ENCODE measurements at regions of chr9 and their contacts with region 1.

Region 1: DNA sequence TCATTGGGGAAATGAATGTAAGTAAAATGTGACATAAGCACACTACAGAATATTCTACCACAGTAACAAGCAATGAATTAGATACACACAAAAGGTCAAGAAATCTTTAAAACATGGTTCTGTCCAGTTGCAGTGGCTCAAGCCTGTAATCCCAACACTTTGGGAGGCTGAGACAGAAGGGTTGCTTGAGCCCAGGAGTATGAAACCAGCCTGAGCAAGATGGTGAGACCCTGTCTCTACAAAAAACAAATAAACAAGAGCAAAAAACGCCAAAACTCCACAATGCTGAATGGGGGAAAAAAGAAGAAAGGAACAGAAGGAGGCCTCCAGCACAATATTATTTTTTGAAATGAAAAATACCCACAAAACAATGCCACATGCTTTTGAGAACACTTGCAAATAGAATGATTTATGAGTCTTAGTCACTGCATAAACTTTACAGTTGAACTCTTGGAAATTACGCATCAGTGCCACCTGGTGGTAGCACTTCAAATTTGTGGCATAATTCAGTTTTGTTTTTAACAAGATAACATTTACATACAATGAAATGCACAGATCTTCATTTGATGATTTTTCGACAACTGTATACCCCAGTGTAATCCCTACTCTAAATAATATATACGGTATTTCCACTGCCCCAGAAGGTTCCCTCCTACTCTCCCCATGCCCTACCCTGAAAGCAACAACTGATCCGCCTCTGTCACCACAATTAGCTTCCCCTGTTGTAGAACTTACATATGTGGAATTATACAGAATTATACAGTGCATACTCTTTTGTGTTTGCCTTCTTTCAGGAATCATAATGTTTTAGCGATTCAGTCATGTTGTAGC is 14.4 kb upstream of the SPINK4 start:
- DNase-seq: peak; percentile 84
- ATAC-seq: peak; percentile 55
- H3K4me3 Mint-ChIP-seq: no peak overlapping the region
- H3K27ac Mint-ChIP-seq: peak overlapping the region; percentile 12
- H3K4me1 Mint-ChIP-seq: peaks cover 33% of the 10 kb centered on the region
- H3K27me3 Mint-ChIP-seq: peaks cover 3% of the 10 kb centered on the region

Region 2: DNA sequence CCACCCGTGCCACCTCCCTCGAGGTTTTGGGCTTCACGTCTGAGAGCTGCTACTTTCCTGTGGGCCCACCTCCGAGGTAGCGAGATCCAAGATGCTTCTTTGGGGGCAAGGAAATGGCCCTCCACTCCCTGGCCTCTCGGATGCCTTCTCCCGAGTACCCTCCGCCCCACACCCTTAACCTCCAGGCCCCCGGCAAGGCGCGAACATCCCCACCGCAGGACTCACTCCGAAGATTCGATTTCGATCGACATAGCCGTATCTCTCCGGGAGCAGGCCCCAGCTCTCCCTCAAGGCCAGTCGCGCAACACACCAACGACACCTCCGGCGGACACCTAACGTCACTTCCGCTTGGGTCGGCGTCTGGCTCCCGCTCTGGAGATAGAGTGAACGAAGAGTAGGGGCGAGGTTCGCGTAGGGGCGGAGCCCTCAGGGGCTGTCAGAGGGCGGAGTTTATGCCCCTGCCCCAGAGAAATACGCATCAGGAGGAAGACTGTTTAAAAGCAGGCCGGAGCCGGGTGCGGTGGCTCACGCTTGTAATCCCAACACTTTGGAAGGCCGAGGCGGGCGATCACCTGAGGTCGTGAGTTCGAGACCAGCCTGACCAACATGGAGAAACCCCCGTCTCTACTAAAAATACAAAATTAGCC is 149.1 kb before region 1 on chr9 and contains the start of gene SMU1:
- CTCF ChIA-PET with region 1: interaction called, 39 read pairs
- POLR2A ChIA-PET with region 1: interaction called, 5 read pairs
- DNase-seq: peak; percentile 98
- ATAC-seq: peak; percentile 98
- H3K4me3 Mint-ChIP-seq: peak within 1 kb of the TSS; percentile 98
- H3K27ac Mint-ChIP-seq: peak within 1 kb of the TSS; percentile 100
- H3K4me1 Mint-ChIP-seq: peaks cover 28% of the 10 kb centered on the region
- H3K27me3 Mint-ChIP-seq: no peaks in the 10 kb centered on the region
- total RNA-seq, gene SMU1: 21.7 to 22.6 TPM

Region 3: GRCh38 chr9:33167046-33167808 is 58.3 kb before region 1 on chr9 and contains the start of gene B4GALT1:
- CTCF ChIA-PET with region 1: interaction called, 21 read pairs
- POLR2A ChIA-PET with region 1: no interaction called
- DNase-seq: peak; percentile 97
- ATAC-seq: peak; percentile 83
- H3K4me3 Mint-ChIP-seq: peak within 1 kb of the TSS; percentile 93
- H3K27ac Mint-ChIP-seq: peak within 1 kb of the TSS; percentile 99
- H3K4me1 Mint-ChIP-seq: peaks cover 58% of the 10 kb centered on the region
- H3K27me3 Mint-ChIP-seq: no peaks in the 10 kb centered on the region
- total RNA-seq, gene B4GALT1: 27.8 to 28.5 TPM

Region 4: DNA sequence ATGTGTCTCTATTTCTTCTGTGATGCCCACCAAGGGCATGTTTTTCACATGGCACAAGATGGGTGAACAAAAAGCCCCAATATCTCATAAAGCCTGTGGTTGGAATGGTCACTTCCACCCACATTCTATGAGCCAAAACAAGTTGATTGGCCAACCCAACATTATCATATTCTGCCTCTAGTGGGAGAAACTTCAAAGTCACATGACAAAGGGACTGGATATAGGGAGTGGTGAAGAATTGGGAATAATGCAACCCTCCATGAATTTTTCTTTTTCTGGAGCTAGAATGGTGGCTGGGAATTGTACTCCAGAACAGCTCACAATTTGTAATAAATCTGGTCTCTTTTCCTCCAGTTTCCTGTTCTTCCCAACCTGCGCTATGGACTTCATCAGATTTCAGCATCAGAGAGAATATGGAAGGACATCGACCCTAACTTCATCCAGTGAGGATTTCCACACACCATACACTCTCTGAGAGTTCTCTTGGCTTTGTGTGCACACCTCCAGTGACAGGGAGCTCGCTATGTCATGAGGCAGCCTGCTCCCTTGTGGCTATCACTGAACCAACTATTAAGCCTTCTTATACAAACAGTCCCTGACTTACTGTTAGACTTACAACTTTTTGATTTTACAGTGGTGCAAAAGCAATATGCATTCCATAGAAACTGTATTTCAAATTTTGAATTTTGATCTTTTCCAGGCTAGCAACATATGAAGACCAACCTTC is 46.4 kb before region 1 on chr9:
- CTCF ChIA-PET with region 1: interaction called, 11 read pairs
- POLR2A ChIA-PET with region 1: no interaction called
- DNase-seq: no peak
- ATAC-seq: peak; percentile 51
- H3K4me3 Mint-ChIP-seq: no peak overlapping the region
- H3K27ac Mint-ChIP-seq: no peak overlapping the region
- H3K4me1 Mint-ChIP-seq: no peaks in the 10 kb centered on the region
- H3K27me3 Mint-ChIP-seq: peaks cover 10% of the 10 kb centered on the region

Region 5: GRCh38 chr9:33197279-33198152 is 28.0 kb before region 1 on chr9:
- CTCF ChIA-PET with region 1: interaction called, 11 read pairs
- POLR2A ChIA-PET with region 1: interaction called, 3 read pairs
- DNase-seq: no peak
- ATAC-seq: no peak
- H3K4me3 Mint-ChIP-seq: no peak overlapping the region
- H3K27ac Mint-ChIP-seq: no peak overlapping the region
- H3K4me1 Mint-ChIP-seq: peaks cover 17% of the 10 kb centered on the region
- H3K27me3 Mint-ChIP-seq: peaks cover 2% of the 10 kb centered on the region

Region 6: GRCh38 chr9:33202552-33203201 is 22.9 kb before region 1 on chr9:
- CTCF ChIA-PET with region 1: interaction called, 11 read pairs
- POLR2A ChIA-PET with region 1: interaction called, 3 read pairs
- DNase-seq: peak; percentile 74
- ATAC-seq: peak; percentile 97
- H3K4me3 Mint-ChIP-seq: peak overlapping the region; percentile 40
- H3K27ac Mint-ChIP-seq: peak overlapping the region; percentile 72
- H3K4me1 Mint-ChIP-seq: peaks cover 33% of the 10 kb centered on the region
- H3K27me3 Mint-ChIP-seq: peaks cover 11% of the 10 kb centered on the region

Region 7: GRCh38 chr9:33239921-33240320 is 14.4 kb after region 1 on chr9 and contains the start of gene SPINK4:
- CTCF ChIA-PET with region 1: interaction called, 22 read pairs
- POLR2A ChIA-PET with region 1: no interaction called
- DNase-seq: no peak
- ATAC-seq: no peak
- H3K4me3 Mint-ChIP-seq: no peak within 1 kb of the TSS
- H3K27ac Mint-ChIP-seq: no peak within 1 kb of the TSS
- H3K4me1 Mint-ChIP-seq: peaks cover 4% of the 10 kb centered on the region
- H3K27me3 Mint-ChIP-seq: peaks cover 3% of the 10 kb centered on the region
- total RNA-seq, gene SPINK4: not detected

Region 8: DNA sequence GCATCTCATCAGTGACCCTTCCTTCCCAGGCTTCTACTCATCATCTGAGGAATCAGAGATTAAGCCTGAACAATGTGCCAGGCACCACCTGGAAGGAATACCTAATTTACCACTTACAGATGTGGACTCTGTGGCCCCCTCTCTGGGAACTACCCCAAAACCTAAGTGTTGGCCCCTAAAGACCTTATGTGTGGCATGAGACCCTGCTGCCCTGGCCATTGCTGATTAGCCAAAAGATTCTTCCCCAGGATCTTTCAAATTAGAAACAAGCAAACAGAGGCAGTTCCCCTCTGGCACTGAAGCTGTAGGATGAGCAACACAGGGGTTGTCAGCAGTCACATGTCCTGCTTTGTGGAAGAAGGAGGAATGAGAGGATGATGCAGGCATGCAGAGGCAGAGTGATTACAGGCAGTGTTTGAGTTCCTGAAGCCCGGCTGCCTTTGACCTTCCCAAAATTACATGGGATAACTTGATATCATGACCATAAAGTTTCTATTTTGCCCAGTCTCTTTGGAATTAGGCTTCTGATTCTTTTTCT is 25.0 kb after region 1 on chr9:
- CTCF ChIA-PET with region 1: no interaction called
- POLR2A ChIA-PET with region 1: no interaction called
- DNase-seq: no peak
- ATAC-seq: no peak
- H3K4me3 Mint-ChIP-seq: no peak overlapping the region
- H3K27ac Mint-ChIP-seq: no peak overlapping the region
- H3K4me1 Mint-ChIP-seq: peaks cover 10% of the 10 kb centered on the region
- H3K27me3 Mint-ChIP-seq: no peaks in the 10 kb centered on the region

Region 9: GRCh38 chr9:33884856-33885701 is 659.5 kb after region 1 on chr9:
- CTCF ChIA-PET with region 1: no interaction called
- POLR2A ChIA-PET with region 1: no interaction called
- DNase-seq: no peak
- ATAC-seq: no peak
- H3K4me3 Mint-ChIP-seq: no peak overlapping the region
- H3K27ac Mint-ChIP-seq: no peak overlapping the region
- H3K4me1 Mint-ChIP-seq: peaks cover 13% of the 10 kb centered on the region
- H3K27me3 Mint-ChIP-seq: no peaks in the 10 kb centered on the region

Measured in activated CD8-positive, alpha-beta T cell treated with anti-CD3 and anti-CD28 coated beads, Interleukin-2, amount 10 ng/mL, durations not matched to agents 7 days and 5 days (primary cell).